ENCODE measurements at regions of chrX and their contacts with region 1.

Region 1: DNA sequence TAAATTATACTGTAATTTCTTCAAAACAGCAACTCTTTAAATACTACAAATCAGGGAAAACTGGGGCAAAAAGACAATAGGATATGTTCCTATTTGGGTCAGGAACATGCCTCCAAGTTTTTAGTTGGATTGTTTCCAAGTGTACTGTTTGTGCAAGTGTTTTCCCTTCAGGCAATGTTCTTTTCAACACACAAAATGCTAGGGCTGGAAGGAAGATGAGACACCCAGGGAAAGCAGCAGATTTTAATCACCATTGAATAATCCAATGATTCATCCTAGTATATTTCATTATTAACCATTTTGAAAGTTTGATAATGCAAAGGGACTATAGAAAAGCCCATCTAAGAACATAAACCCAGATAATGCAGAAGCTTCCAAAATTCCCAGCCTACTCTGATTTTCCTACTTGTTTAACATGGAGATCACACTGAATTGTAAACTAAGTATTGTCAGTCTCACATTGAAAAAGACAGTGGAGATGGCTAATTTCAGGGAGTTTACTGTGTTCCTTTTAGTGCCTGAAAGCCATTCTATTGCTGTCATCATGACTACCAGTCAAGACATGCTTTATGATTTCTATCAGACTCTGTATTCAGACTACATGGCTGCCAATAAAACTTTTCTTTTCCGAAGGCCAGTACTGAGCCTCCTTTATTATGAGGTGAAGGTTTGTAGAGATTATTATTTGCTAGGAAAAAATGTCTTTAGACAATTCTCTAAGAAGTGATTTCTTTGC is 38.6 kb downstream of the COL4A6 start:
- DNase-seq: peak; percentile 92
- ATAC-seq: peak; percentile 54
- H3K4me3 ChIP-seq: peak overlapping the region; percentile 50; the same call in 1 of the 2 replicates
- H3K27ac ChIP-seq: peak overlapping the region; percentile 99
- H3K4me1 ChIP-seq: peaks cover 68% of the 10 kb centered on the region
- H3K27me3 ChIP-seq: no peaks in the 10 kb centered on the region
- CTCF ChIP-seq: no peak

Region 2: GRCh38 chrX:108312938-108313337 is 86.7 kb before region 1 on chrX:
- CTCF ChIA-PET with region 1: no interaction called
- POLR2A ChIA-PET with region 1: no interaction called
- intact Hi-C with region 1: loop called (anchors 2 kb)
- DNase-seq: peak; percentile 94
- ATAC-seq: peak; percentile 80
- H3K4me3 ChIP-seq: no peak overlapping the region
- H3K27ac ChIP-seq: peak overlapping the region; percentile 98
- H3K4me1 ChIP-seq: peaks cover 65% of the 10 kb centered on the region
- H3K27me3 ChIP-seq: no peaks in the 10 kb centered on the region
- CTCF ChIP-seq: no peak

Region 3: GRCh38 chrX:108332281-108332680 is 67.3 kb before region 1 on chrX:
- CTCF ChIA-PET with region 1: no interaction called
- POLR2A ChIA-PET with region 1: no interaction called
- intact Hi-C with region 1: no loop called
- DNase-seq: no peak
- ATAC-seq: no peak
- H3K4me3 ChIP-seq: no peak overlapping the region
- H3K27ac ChIP-seq: no peak overlapping the region
- H3K4me1 ChIP-seq: 0 out of 2 replicates have a peak, but pooled peaks cover 4% of the 10 kb centered on the region
- H3K27me3 ChIP-seq: no peaks in the 10 kb centered on the region
- CTCF ChIP-seq: no peak

Region 4: DNA sequence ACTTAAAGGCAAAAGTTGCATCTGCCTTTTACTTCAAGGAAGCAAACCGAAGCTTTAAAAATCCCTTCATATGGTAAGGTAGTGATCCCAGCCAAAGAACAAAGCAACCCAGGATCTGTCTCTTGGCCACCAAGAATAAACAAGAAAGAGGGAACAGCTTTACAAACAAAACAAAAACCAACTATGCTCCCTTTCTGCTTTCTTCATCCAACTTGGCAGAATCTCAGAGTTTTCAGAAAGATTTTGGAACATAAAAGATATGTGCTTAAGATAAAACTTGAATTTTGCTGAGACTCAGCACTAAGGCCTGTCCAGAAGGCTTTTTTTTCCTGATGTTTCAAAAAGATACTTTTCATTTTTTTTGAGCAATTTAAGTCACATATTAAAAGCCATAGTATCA is 55.4 kb before region 1 on chrX:
- CTCF ChIA-PET with region 1: no interaction called
- POLR2A ChIA-PET with region 1: no interaction called
- intact Hi-C with region 1: loop called (anchors 5 kb)
- DNase-seq: no peak
- ATAC-seq: no peak
- H3K4me3 ChIP-seq: no peak overlapping the region
- H3K27ac ChIP-seq: peak overlapping the region; percentile 31
- H3K4me1 ChIP-seq: peaks cover 14% of the 10 kb centered on the region; the same call in 1 of the 2 replicates
- H3K27me3 ChIP-seq: no peaks in the 10 kb centered on the region
- CTCF ChIP-seq: no peak

Region 5: GRCh38 chrX:108415891-108416290 is 16.3 kb after region 1 on chrX:
- CTCF ChIA-PET with region 1: no interaction called
- POLR2A ChIA-PET with region 1: no interaction called
- intact Hi-C with region 1: loop called (anchors 1 kb)
- DNase-seq: peak; percentile 80
- ATAC-seq: peak; percentile 73
- H3K4me3 ChIP-seq: no peak overlapping the region
- H3K27ac ChIP-seq: peak overlapping the region; percentile 96
- H3K4me1 ChIP-seq: peaks cover 49% of the 10 kb centered on the region
- H3K27me3 ChIP-seq: no peaks in the 10 kb centered on the region
- CTCF ChIP-seq: no peak

Region 6: DNA sequence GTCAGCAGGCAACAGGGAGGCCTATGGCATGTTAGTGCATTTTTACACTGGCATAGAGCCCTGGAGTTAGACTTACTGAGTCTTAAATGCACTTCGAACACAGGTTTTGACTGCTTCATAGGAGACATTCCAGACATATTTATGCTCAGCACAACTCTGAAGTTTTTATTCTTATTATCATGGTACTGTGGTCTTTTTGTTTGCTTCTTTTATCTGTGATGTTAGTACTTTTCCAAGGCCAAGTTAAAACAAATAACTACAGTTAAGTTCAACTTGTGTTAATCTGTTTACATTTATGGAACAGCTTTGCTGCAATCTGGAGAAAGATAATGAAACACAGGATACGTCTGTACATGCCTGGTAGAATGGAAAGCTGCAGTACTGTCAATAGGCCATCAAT is 116.6 kb after region 1 on chrX:
- CTCF ChIA-PET with region 1: no interaction called
- POLR2A ChIA-PET with region 1: no interaction called
- intact Hi-C with region 1: no loop called
- DNase-seq: no peak
- ATAC-seq: no peak
- H3K4me3 ChIP-seq: no peak overlapping the region
- H3K27ac ChIP-seq: no peak overlapping the region
- H3K4me1 ChIP-seq: 0 out of 2 replicates have a peak, but pooled peaks cover 4% of the 10 kb centered on the region
- H3K27me3 ChIP-seq: no peaks in the 10 kb centered on the region
- CTCF ChIP-seq: no peak

Region 7: GRCh38 chrX:108537005-108537404 is 137.4 kb after region 1 on chrX:
- CTCF ChIA-PET with region 1: no interaction called
- POLR2A ChIA-PET with region 1: no interaction called
- intact Hi-C with region 1: loop called (anchors 5 kb)
- DNase-seq: peak; percentile 73
- ATAC-seq: peak; percentile 67
- H3K4me3 ChIP-seq: no peak overlapping the region
- H3K27ac ChIP-seq: no peak overlapping the region
- H3K4me1 ChIP-seq: peaks cover 11% of the 10 kb centered on the region; the same call in 1 of the 2 replicates
- H3K27me3 ChIP-seq: no peaks in the 10 kb centered on the region
- CTCF ChIP-seq: peak; percentile 77

Region 8: DNA sequence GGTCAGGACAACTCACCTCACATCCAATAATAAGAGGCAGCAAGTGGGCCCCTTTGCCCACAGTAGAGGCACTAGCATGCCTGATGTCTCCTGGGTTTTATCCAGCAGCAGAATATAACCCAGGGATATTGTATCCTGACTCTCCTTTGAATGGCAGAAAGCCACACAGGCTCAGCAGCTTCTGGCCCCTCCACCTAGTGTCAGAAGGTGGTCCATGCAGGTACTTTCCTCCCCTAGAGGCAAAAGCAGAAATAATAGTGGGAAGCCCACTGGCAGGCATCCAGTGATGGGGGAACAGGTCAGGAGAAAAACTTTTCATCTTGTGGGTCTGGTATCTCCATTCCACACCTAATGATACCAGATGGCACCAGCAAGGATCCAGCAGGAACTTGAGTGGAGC is 412.3 kb after region 1 on chrX:
- CTCF ChIA-PET with region 1: no interaction called
- POLR2A ChIA-PET with region 1: no interaction called
- intact Hi-C with region 1: no loop called
- DNase-seq: no peak
- ATAC-seq: no peak
- H3K4me3 ChIP-seq: no peak overlapping the region
- H3K27ac ChIP-seq: no peak overlapping the region
- H3K4me1 ChIP-seq: no peaks in the 10 kb centered on the region
- H3K27me3 ChIP-seq: no peaks in the 10 kb centered on the region
- CTCF ChIP-seq: peak; percentile 16; the same call in 1 of the 2 replicates

Region 9: DNA sequence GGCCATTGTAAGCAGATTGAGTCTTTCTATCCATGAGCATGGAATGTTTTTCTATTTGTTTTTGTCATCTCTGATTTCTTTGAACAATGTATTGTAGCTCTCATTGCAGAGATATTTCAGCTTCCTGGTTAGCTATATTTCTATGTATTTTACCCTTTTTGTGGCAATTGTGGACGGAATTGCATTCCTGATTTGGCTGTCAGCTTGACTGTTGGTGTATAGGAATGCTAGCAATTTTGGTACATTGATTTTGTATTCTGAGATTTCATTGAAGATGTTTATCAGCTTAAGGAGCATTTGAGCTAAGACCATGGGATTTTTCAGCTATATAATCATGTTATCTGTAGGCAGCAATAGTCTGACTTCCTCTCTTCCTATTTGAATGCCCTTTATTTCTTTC is 927.7 kb after region 1 on chrX:
- CTCF ChIA-PET with region 1: no interaction called
- POLR2A ChIA-PET with region 1: interaction called, 10 read pairs
- intact Hi-C with region 1: no loop called
- DNase-seq: no peak
- ATAC-seq: no peak
- H3K4me3 ChIP-seq: no peak overlapping the region
- H3K27ac ChIP-seq: no peak overlapping the region
- H3K4me1 ChIP-seq: no peaks in the 10 kb centered on the region
- H3K27me3 ChIP-seq: no peaks in the 10 kb centered on the region
- CTCF ChIP-seq: no peak

Measured in PC-3 (cell line).